Mammary epithelial cell (primary cell): ENCODE measurements at regions of chr5 and their contacts with region 1.

Region 1: DNA sequence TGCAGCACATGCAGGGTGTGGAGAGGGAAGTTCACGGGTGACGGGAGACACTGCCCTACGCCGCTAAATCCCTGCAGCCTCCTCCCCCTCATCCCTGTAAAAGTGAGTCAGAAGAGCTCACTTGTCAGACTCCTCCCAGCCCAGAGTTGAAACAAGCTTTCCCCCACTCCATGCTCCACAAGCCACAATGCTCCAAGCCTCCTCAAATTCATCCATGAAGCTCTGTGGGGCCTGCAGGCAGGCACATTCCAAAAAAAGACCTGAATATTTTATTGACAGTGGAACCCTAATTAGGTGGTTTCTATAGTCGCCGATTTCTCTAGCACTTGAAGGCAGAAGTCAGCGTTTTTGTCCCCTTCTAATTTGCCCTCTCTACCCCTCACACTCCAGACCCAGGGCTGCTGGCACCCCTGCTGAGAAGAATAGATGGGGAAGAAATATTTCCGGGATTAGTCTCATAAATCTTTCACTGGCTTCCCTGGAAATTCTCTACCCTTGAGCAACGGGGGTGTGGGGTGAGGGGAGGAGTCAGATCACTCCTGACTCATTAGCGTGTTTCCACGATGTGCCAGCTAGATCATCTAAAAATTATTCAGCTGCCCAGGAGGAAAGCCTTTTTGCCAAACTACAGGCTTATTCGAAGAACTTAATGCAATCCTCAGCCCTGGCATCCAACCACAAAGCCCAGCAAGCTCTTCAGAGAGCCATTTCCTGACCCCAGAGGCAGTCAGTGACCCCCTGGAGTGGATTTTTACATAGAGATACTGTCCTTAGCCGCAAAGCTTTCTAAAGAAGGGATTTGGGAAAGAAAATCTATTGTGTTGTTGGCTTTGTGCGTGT is 97.2 kb downstream of the ENC1 start:
- DNase-seq: peak; percentile 91
- H3K4me3 ChIP-seq: peak overlapping the region in 1 of 3 experiments; percentile 16
- H3K27ac ChIP-seq: peak overlapping the region; percentile 92
- H3K4me1 ChIP-seq: peaks cover 46% of the 10 kb centered on the region
- H3K27me3 ChIP-seq: no peaks in the 10 kb centered on the region
- CTCF ChIP-seq: no peak

Region 2: DNA sequence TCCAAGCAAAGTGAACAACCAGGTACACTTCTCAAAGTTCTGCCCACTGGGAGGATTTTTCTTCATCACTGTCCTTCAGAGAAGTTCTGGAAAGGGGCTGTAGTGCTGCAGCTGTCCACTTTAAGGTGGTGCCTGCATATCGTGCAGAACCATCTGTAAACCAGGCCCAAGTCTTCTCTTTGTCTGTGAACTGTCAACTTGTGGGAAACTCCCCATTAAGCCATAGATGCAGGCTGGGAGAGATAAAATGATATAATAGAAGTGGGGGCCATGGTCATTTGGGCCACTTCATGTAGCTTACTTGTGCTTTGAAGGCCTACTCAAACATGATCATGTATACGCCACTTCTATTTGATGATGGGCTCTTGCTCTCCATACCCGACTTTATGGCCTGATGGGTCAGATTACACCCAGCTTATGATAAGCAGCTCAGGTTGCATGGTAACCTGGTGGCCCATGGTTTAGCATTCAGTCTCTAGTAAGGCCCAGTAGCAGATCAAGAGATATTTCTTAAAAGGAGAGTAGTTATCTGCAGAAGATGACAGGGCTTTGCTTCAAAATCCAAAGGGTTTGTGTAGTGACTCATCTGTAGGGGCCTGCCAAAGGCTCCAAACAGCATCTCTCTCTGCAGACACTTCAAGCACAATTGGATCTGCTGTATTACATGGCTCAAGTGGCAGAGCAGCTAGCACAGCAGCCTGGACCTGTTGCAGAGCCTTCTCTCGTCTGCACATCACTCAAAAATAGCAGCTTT is 1060.8 kb before region 1 on chr5:
- CTCF ChIA-PET with region 1: interaction called, 12 read pairs
- dilution Hi-C with region 1: no loop called
- in situ Hi-C with region 1: no loop called
- intact Hi-C with region 1: no loop called
- DNase-seq: no peak
- H3K4me3 ChIP-seq: no peak overlapping the region
- H3K27ac ChIP-seq: no peak overlapping the region
- H3K4me1 ChIP-seq: no peaks in the 10 kb centered on the region
- H3K27me3 ChIP-seq: peaks cover 3% of the 10 kb centered on the region
- CTCF ChIP-seq: no peak

Region 3: DNA sequence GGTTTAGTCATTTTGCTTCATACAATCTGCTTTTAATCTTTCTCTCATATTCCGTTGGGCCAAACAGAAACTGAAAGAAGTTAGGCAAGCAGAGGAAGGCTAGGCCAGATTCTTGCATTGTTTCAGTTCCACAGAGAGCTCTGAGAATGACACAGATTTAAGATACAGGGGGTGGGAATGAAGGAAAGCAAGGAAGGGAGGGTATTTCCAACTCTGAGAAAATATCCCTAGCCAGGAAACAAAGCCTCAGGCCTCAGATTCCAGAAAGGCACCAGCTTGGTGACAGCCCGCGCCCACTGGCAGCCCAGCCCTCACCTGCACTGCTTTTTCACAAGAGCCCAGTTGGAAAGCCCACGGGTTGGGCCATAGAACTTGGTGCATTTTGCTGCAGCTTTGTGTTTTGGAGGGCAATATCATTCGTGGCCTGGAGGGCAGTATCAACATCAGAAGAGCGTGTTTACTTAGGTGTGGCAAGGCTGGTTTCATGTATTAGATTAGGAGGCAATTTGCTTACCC is 33.6 kb after region 1 on chr5:
- CTCF ChIA-PET with region 1: no interaction called
- dilution Hi-C with region 1: loop called (anchors 5 kb)
- in situ Hi-C with region 1: no loop called
- intact Hi-C with region 1: loop called (anchors 2 kb)
- DNase-seq: peak; percentile 44
- H3K4me3 ChIP-seq: no peak overlapping the region
- H3K27ac ChIP-seq: peak overlapping the region; percentile 27
- H3K4me1 ChIP-seq: peaks cover 35% of the 10 kb centered on the region
- H3K27me3 ChIP-seq: no peaks in the 10 kb centered on the region
- CTCF ChIP-seq: no peak

Region 4: GRCh38 chr5:74632947-74633356 is 89.6 kb after region 1 on chr5:
- CTCF ChIA-PET with region 1: no interaction called
- dilution Hi-C with region 1: no loop called
- in situ Hi-C with region 1: no loop called
- intact Hi-C with region 1: loop called (anchors 2 kb)
- DNase-seq: peak; percentile 82
- H3K4me3 ChIP-seq: no peak overlapping the region
- H3K27ac ChIP-seq: peak overlapping the region; percentile 84
- H3K4me1 ChIP-seq: peaks cover 96% of the 10 kb centered on the region
- H3K27me3 ChIP-seq: no peaks in the 10 kb centered on the region
- CTCF ChIP-seq: no peak

Region 5: GRCh38 chr5:74673011-74673790 is 129.8 kb after region 1 on chr5:
- CTCF ChIA-PET with region 1: no interaction called
- dilution Hi-C with region 1: no loop called
- in situ Hi-C with region 1: no loop called
- intact Hi-C with region 1: no loop called
- DNase-seq: no peak
- H3K4me3 ChIP-seq: no peak overlapping the region
- H3K27ac ChIP-seq: no peak overlapping the region
- H3K4me1 ChIP-seq: peaks cover 7% of the 10 kb centered on the region
- H3K27me3 ChIP-seq: no peaks in the 10 kb centered on the region
- CTCF ChIP-seq: peak in 1 of 2 donors; percentile 57

Region 6: DNA sequence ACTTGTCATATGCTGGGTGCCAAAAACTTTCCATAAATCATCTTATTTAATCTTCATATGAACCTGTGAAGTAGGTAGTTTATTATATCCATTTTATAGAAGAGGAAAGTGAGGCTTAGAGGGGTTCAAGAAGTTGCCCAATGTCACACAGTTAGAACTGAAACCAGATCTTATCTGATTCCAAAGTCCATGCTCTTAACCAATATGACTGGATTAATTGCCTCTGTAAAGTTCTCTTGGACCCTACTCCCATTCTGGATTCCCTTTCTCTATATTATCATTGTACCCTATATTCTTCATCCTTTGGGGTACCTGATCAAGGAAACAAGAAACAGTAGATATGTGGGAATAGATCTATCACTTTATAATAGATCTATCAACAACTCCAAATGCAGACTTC is 573.5 kb after region 1 on chr5:
- CTCF ChIA-PET with region 1: no interaction called
- dilution Hi-C with region 1: no loop called
- in situ Hi-C with region 1: no loop called
- intact Hi-C with region 1: no loop called
- DNase-seq: no peak
- H3K4me3 ChIP-seq: no peak overlapping the region
- H3K27ac ChIP-seq: no peak overlapping the region
- H3K4me1 ChIP-seq: peaks cover 16% of the 10 kb centered on the region
- H3K27me3 ChIP-seq: no peaks in the 10 kb centered on the region
- CTCF ChIP-seq: no peak